AG04449 (cell line): ENCODE measurements at regions of chr17 and their contacts with region 1.

Region 1: DNA sequence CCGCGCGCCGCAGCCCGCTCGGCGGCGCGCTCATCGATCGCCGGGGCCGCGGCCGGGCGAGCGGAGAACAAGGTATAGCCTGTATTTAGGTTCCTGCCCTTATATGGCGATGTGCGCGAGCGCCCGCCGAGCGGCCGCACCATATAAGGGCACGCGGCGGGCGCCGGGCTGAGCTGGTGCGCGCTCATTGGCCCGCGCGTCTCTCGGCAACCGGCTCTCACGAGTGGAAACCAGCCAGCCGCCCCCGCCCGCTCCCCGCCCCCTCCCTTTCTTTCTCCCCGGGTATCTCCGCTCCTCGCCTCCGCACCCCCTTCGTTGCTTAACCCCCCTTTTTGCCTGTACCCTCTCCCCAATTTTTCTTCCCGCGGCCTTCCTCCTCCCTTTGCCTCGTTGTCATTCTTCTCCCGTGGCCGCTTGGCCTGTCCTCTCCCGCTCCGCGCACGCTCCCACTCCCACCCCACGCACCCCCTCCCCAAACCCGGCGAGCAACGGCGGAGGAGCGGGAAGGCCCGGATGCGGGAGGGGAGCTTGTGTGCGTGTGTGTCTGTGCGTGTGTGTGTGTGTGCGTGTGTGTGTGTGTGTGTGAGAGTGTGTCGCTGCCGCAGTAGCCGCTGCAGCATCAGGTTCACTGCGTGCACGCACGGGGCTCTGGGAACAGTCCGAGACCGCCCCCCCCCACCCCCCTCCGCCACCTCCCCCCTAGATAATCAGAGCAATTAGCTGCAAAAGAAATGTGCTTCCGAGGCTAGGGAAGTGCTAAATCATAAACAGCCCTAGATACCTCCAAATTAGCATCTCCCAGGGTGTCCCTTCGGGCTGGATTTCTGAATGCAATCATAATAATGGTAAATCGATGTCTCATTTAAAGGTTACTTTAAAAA is 13.5 kb upstream of the CBX8 start:
- DNase-seq: no peak
- H3K4me3 ChIP-seq: peak overlapping the region; percentile 39
- CTCF ChIP-seq: no peak

Region 2: GRCh38 chr17:79796763-79797491 is 13.4 kb before region 1 on chr17 and contains the start of gene CBX8:
- CTCF ChIA-PET with region 1: interaction called, 15 read pairs
- POLR2A ChIA-PET with region 1: interaction called, 5 read pairs
- DNase-seq: peak; percentile 89
- H3K4me3 ChIP-seq: peak within 1 kb of the TSS; percentile 82
- CTCF ChIP-seq: peak; percentile 25